CD14-positive monocyte (primary cell): ENCODE measurements at regions of chr14 and their contacts with region 1.

Region 1: GRCh38 chr14:99266181-99267178 is 5.5 kb downstream of the BCL11B start:
- DNase-seq: peak; percentile 8 to 31 (median 30)
- H3K4me3 ChIP-seq: no peak overlapping the region
- H3K4me3 Mint-ChIP-seq: peak overlapping the region in 1 of 2 donors; percentile 87
- H3K27ac ChIP-seq: no peak overlapping the region
- H3K27ac Mint-ChIP-seq: no peak overlapping the region
- H3K4me1 ChIP-seq: no peaks in the 10 kb centered on the region
- H3K4me1 Mint-ChIP-seq: peaks cover 10% of the 10 kb centered on the region
- H3K27me3 ChIP-seq: peaks cover 66 to 93% of the 10 kb centered on the region in 2 donors
- H3K27me3 Mint-ChIP-seq: peaks cover 80 to 98% (median 87%) of the 10 kb centered on the region in 3 donors
- CTCF ChIP-seq: peak; percentile 96

Region 2: GRCh38 chr14:98138666-98139065 is 1127.8 kb before region 1 on chr14:
- intact Hi-C with region 1: loop called (anchors 1 to 5 kb)
- DNase-seq: peak in 1 of 3 donors; percentile 4
- H3K4me3 ChIP-seq: no peak overlapping the region
- H3K4me3 Mint-ChIP-seq: no peak overlapping the region
- H3K27ac ChIP-seq: no peak overlapping the region
- H3K27ac Mint-ChIP-seq: no peak overlapping the region
- H3K4me1 ChIP-seq: no peaks in the 10 kb centered on the region
- H3K4me1 Mint-ChIP-seq: no peaks in the 10 kb centered on the region
- H3K27me3 ChIP-seq: peaks cover 3% of the 10 kb centered on the region in 2 donors
- H3K27me3 Mint-ChIP-seq: peaks cover 15 to 24% (median 15%) of the 10 kb centered on the region in 3 donors
- CTCF ChIP-seq: peak; percentile 63

Region 3: GRCh38 chr14:99230208-99231151 is 36.0 kb before region 1 on chr14:
- intact Hi-C with region 1: no loop called
- DNase-seq: no peak
- H3K4me3 ChIP-seq: no peak overlapping the region
- H3K4me3 Mint-ChIP-seq: peak overlapping the region in 1 of 2 donors; percentile 39
- H3K27ac ChIP-seq: no peak overlapping the region
- H3K27ac Mint-ChIP-seq: no peak overlapping the region
- H3K4me1 ChIP-seq: no peaks in the 10 kb centered on the region
- H3K4me1 Mint-ChIP-seq: peaks cover 2% of the 10 kb centered on the region
- H3K27me3 ChIP-seq: peaks cover 2 to 42% of the 10 kb centered on the region in 2 donors
- H3K27me3 Mint-ChIP-seq: peaks cover 38 to 57% (median 52%) of the 10 kb centered on the region in 3 donors
- CTCF ChIP-seq: no peak